BJ (cell line): ENCODE measurements at regions of chr1 and their contacts with region 1.

Region 1: GRCh38 chr1:93909146-93910050 is at the start of gene GCLM:
- DNase-seq: peak; percentile 74
- H3K4me3 ChIP-seq: peak within 1 kb of the TSS; percentile 90
- H3K27me3 ChIP-seq: no peaks in the 10 kb centered on the region
- CTCF ChIP-seq: peak; percentile 74
- polyA plus RNA-seq, gene GCLM: 19.1 and 35.1 TPM in 2 replicates

Region 2: DNA sequence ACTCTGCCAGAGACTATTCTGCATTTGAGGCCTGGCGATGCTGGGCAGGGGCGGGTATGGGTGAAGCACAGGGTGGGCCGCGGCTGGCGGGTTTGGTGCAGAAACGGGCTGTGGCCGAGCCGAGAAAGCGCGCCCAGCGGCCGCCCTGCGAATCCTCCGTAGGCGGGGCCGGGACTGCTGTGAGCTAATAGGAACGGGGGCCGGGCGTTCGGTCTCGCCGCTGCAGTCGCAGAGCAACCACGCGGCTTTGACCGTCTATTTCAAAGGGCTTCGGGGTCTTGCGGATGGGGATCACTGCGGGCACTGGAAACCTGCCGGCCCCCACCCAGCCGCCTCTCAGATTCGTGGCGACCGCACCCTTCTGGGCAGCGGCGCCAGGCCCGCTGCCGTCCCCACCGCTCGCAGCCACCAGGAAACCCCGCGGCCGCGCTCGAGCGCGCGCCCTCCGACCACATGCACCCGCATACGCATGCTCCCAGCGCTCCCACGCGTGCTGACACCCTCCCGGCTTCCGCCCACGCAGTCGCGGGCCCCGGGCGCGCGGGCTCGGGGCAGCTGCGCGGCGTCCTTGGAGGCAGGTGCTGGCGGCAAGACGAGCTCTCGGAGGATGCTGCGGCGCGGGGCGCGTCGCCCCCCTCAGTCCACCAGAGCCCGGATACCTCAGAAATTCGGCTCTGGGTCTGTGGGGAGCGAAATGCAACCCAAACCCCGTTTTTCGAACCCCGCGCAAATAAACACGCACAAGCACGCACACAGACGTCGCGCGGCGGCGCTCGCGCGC is 63.0 kb before region 1 on chr1:
- CTCF ChIA-PET with region 1: no interaction called
- POLR2A ChIA-PET with region 1: interaction called, 12 read pairs
- DNase-seq: no peak
- H3K4me3 ChIP-seq: peak overlapping the region; percentile 84
- H3K27me3 ChIP-seq: no peaks in the 10 kb centered on the region
- CTCF ChIP-seq: peak; percentile 59

Region 3: GRCh38 chr1:93865253-93865652 is 44.1 kb before region 1 on chr1:
- CTCF ChIA-PET with region 1: no interaction called
- POLR2A ChIA-PET with region 1: no interaction called
- DNase-seq: no peak
- H3K4me3 ChIP-seq: no peak overlapping the region
- H3K27me3 ChIP-seq: no peaks in the 10 kb centered on the region
- CTCF ChIP-seq: no peak

Region 4: GRCh38 chr1:93919780-93920179 is 10.4 kb after region 1 on chr1:
- CTCF ChIA-PET with region 1: interaction called, 11 read pairs
- POLR2A ChIA-PET with region 1: no interaction called
- DNase-seq: no peak
- H3K4me3 ChIP-seq: no peak overlapping the region
- H3K27me3 ChIP-seq: peaks cover 4% of the 10 kb centered on the region
- CTCF ChIP-seq: no peak

Region 5: GRCh38 chr1:93960641-93961147 is 51.3 kb after region 1 on chr1:
- CTCF ChIA-PET with region 1: interaction called, 14 read pairs
- POLR2A ChIA-PET with region 1: no interaction called
- DNase-seq: peak; percentile 36
- H3K4me3 ChIP-seq: no peak overlapping the region
- H3K27me3 ChIP-seq: peaks cover 3% of the 10 kb centered on the region
- CTCF ChIP-seq: no peak

Region 6: GRCh38 chr1:93969371-93969770 is 60.0 kb after region 1 on chr1:
- CTCF ChIA-PET with region 1: interaction called, 10 read pairs
- POLR2A ChIA-PET with region 1: no interaction called
- DNase-seq: no peak
- H3K4me3 ChIP-seq: no peak overlapping the region
- H3K27me3 ChIP-seq: no peaks in the 10 kb centered on the region; the same call in 1 of the 2 replicates
- CTCF ChIP-seq: no peak

Region 7: GRCh38 chr1:93980320-93981273 is 71.2 kb after region 1 on chr1:
- CTCF ChIA-PET with region 1: interaction called, 13 read pairs
- POLR2A ChIA-PET with region 1: no interaction called
- DNase-seq: no peak
- H3K4me3 ChIP-seq: no peak overlapping the region
- H3K27me3 ChIP-seq: no peaks in the 10 kb centered on the region
- CTCF ChIP-seq: peak; percentile 26; the same call in 1 of the 2 replicates

Region 8: GRCh38 chr1:94025383-94026340 is 116.3 kb after region 1 on chr1:
- CTCF ChIA-PET with region 1: interaction called, 16 read pairs
- POLR2A ChIA-PET with region 1: interaction called, 3 read pairs
- DNase-seq: no peak
- H3K4me3 ChIP-seq: no peak overlapping the region
- H3K27me3 ChIP-seq: peaks cover 2% of the 10 kb centered on the region; the same call in 1 of the 2 replicates
- CTCF ChIP-seq: peak; percentile 67